T-cell (primary cell): ENCODE measurements at regions of chr5 and their contacts with region 1.

Region 1: DNA sequence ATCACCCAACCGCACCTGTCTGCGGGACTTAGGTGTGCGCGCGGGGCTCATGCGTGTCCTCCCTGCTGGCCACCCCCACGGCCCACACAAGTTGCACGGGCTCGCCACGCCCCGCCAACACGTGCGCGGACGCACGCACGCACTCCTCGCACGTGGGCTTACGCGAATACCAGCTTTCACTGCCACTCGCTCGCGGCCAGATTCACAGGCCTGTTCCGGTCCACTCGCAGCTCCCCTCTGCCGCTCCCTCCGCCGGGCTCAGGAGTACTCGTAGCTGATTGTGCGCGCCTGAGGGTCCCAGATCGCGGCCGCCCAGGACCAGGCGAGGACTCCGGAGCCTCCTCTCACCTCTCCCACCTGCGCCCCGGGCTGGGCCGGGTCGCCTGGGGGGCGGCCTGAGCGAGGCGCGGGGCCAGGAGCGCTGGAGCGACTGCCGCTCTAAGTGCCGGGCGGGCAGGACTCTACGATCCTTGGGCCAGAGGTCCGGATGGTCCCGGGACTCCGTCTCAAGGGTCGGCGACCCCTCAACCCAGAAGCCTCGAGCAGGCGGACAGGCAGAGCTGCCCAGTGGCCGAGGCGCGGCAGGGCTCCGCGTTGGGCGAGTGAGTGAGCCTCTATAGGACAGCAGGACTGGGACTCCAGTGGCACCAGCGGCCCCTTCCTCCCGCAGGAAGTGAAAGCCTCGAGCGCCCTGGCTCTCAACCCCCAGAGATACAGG is 3.4 kb downstream of the PCDHGC5 start:
- DNase-seq: peak in 3 of 35 experiments; percentile 15 to 21 (median 20)
- ATAC-seq: peak; percentile 52 to 65 (median 59)
- H3K4me3 ChIP-seq: peak overlapping the region; percentile 15 to 61
- H3K4me3 Mint-ChIP-seq: peak overlapping the region; percentile 53 to 77 (median 73)
- H3K27ac ChIP-seq: no peak overlapping the region
- H3K27ac Mint-ChIP-seq: peak overlapping the region in 1 of 2 donors; percentile 57
- H3K4me1 ChIP-seq: peaks cover 0 to 16% of the 10 kb centered on the region in 2 experiments
- H3K4me1 Mint-ChIP-seq: peaks cover 14 to 19% (median 16%) of the 10 kb centered on the region in 3 donors
- H3K27me3 ChIP-seq: peaks cover 11 to 86% of the 10 kb centered on the region in 2 experiments
- H3K27me3 Mint-ChIP-seq: peaks cover 75 to 89% of the 10 kb centered on the region in 2 donors

Region 2: DNA sequence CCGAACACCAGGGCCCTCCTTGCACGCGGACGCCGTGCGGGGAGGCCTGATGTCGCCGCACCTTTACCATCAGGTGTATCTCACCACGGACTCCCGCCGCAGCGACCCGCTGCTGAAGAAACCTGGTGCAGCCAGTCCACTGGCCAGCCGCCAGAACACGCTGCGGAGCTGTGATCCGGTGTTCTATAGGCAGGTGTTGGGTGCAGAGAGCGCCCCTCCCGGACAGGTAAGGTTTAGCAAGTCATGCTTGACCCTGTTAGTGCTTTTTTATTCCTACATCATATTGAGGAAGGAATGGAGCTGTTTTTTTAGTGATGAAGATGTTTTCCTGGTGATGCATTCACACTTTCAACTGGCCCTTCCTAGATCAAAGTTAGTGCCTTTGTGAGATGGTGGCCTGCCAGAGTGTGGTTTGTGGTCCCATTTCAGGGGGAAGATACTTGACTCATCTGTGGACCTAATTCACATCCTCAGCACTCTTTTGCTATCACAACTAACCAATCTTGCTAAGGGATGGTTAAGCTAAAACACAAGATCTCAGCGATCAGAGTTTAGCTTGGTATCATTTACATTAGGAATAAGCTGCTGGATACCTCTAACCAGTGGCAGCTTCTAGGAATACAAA is 13.9 kb before region 1 on chr5:
- CTCF ChIA-PET with region 1: no interaction called
- POLR2A ChIA-PET with region 1: no interaction called
- DNase-seq: no peak
- ATAC-seq: no peak
- H3K4me3 ChIP-seq: no peak overlapping the region
- H3K4me3 Mint-ChIP-seq: peak overlapping the region in 1 of 3 donors; percentile 37
- H3K27ac ChIP-seq: no peak overlapping the region
- H3K27ac Mint-ChIP-seq: no peak overlapping the region
- H3K4me1 ChIP-seq: peaks cover 0 to 23% of the 10 kb centered on the region in 2 experiments
- H3K4me1 Mint-ChIP-seq: peaks cover 27 to 32% (median 29%) of the 10 kb centered on the region in 3 donors
- H3K27me3 ChIP-seq: peaks cover 29 to 55% of the 10 kb centered on the region in 2 experiments
- H3K27me3 Mint-ChIP-seq: peaks cover 57 to 86% of the 10 kb centered on the region in 2 donors

Region 3: DNA sequence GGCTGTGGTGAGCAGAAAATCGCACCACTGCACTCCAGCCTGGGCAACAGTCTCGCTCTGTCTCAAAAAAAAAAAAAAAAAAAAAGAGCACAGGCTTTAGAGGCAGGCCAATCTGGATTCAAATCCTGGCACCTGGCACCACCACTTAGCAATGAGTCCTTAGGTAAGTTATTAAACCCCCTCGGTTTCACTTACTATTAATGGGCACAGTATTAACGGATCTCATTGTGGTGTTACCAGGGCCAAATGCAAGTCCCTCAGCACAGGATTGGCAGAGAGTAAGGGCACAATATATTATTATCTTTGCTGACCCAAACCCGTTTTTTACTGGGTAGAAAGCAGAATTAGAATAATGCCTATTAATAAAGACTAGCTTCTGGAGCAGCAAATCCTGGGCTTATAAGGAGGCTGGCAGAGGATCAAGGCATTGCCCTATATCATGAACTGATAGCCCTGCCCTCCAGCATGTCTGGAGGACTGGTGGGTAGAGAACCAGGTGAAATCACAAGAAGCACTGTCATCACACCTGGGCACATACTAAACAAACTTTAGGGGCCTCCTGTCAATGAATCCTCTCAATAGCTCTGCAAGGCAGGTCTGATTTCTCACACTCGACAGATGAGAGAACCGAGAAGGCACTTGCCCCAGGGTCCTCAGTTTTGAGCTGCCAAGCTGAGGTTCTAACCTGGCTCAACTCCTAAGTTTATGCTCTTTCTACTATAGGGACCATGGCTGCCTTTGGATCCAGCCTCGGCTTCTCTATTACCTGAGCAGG is 14.2 kb after region 1 on chr5:
- CTCF ChIA-PET with region 1: no interaction called
- POLR2A ChIA-PET with region 1: no interaction called
- DNase-seq: no peak
- ATAC-seq: no peak
- H3K4me3 ChIP-seq: no peak overlapping the region
- H3K4me3 Mint-ChIP-seq: no peak overlapping the region
- H3K27ac ChIP-seq: no peak overlapping the region
- H3K27ac Mint-ChIP-seq: no peak overlapping the region
- H3K4me1 ChIP-seq: peaks cover 0 to 3% of the 10 kb centered on the region in 2 experiments
- H3K4me1 Mint-ChIP-seq: peaks cover 3 to 7% (median 5%) of the 10 kb centered on the region in 3 donors
- H3K27me3 ChIP-seq: peaks cover 0 to 7% of the 10 kb centered on the region in 2 experiments
- H3K27me3 Mint-ChIP-seq: peaks cover 4 to 6% of the 10 kb centered on the region in 2 donors

Region 4: GRCh38 chr5:141771031-141771430 is 278.7 kb after region 1 on chr5:
- CTCF ChIA-PET with region 1: no interaction called
- POLR2A ChIA-PET with region 1: no interaction called
- DNase-seq: no peak
- ATAC-seq: no peak
- H3K4me3 ChIP-seq: no peak overlapping the region
- H3K4me3 Mint-ChIP-seq: no peak overlapping the region
- H3K27ac ChIP-seq: no peak overlapping the region
- H3K27ac Mint-ChIP-seq: no peak overlapping the region
- H3K4me1 ChIP-seq: no peaks in the 10 kb centered on the region
- H3K4me1 Mint-ChIP-seq: no peaks in the 10 kb centered on the region
- H3K27me3 ChIP-seq: peaks cover 0 to 29% of the 10 kb centered on the region in 2 experiments
- H3K27me3 Mint-ChIP-seq: peaks cover 4 to 5% of the 10 kb centered on the region in 2 donors

Region 5: DNA sequence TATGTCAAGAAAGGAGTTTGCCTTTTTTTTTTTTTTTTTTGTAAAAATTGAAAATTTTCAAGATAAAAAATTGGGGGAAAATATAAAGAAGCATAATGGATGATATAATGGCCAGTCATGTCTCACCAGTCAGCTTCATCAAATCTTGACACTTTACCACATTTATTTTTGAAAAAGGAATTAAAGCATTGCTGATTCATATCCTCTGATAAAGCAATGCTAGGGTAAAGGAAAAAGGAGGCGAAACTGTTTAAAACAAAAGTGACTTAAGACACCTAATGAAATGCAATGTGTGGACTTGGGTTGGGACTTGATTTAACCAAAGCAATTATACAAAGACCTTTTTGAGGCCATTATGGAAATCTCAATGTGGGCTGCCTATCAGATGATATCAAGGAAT is 1486.4 kb after region 1 on chr5:
- CTCF ChIA-PET with region 1: no interaction called
- POLR2A ChIA-PET with region 1: interaction called in 1 of 2 experiments, 11 read pairs
- DNase-seq: no peak
- ATAC-seq: no peak
- H3K4me3 ChIP-seq: no peak overlapping the region
- H3K4me3 Mint-ChIP-seq: no peak overlapping the region
- H3K27ac ChIP-seq: peak overlapping the region; percentile 71
- H3K27ac Mint-ChIP-seq: peak overlapping the region; percentile 88 to 97
- H3K4me1 ChIP-seq: peaks cover 6 to 67% of the 10 kb centered on the region in 2 experiments
- H3K4me1 Mint-ChIP-seq: peaks cover 53 to 87% (median 70%) of the 10 kb centered on the region in 3 donors
- H3K27me3 ChIP-seq: no peaks in the 10 kb centered on the region
- H3K27me3 Mint-ChIP-seq: no peaks in the 10 kb centered on the region